ENCODE measurements at regions of chr11 and their contacts with region 1.

Region 1: DNA sequence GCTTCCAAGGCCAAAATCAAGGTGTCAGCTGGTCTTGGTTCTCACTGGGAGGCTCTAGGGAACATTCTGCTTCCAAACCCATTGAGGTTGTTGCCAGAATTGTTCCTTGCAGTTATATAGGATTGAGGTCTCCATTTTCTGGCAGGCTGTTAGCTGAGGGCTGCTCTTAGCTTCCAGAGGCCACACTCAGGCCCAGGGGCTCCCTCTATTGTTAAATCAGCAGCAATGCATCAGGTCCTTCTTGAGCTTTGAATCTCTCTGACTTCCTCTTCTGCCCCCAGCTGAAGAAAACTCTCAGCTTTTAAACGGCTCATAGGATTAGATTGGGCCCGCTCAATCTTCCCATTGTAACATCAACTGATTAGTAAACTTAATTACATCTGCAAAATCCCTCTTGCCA is 39.3 kb upstream of the BSX start:
- DNase-seq: peak; percentile 76
- H3K4me3 Mint-ChIP-seq: no peak overlapping the region
- H3K27ac Mint-ChIP-seq: no peak overlapping the region
- H3K4me1 Mint-ChIP-seq: peaks cover 6% of the 10 kb centered on the region
- H3K27me3 Mint-ChIP-seq: peaks cover 23% of the 10 kb centered on the region

Region 2: DNA sequence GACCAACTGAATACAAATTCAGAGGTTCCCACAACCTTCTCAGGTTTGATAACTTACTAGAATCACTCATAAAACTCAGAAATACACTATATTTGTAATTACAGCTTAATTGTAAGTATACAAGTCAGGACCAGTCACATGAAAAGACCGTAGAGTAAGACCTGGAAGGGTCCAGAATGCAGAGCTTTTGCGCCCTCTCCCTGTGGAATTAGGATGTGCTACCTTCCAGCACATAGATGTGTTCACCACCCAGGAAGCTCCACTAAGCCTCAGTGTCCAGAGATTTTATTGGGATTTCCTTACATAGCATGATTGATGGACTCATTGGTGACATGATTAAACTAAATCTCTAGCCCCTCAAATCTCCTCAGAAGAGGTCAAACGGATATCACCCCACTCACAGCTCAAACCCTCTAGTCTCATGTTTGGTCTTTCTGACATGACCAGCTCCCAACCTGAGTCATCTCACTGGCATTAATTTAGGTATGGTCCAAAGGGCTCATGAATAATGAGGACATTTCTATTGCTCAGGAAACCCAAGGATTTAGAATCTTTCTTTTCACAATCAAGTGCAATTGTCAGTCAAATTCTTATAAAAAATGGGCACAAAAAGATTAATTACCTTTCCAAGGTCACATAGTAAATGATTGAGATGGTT is 442.7 kb before region 1 on chr11:
- intact Hi-C with region 1: loop called (anchors 2 kb)
- DNase-seq: no peak
- H3K4me3 Mint-ChIP-seq: no peak overlapping the region
- H3K27ac Mint-ChIP-seq: no peak overlapping the region
- H3K4me1 Mint-ChIP-seq: peaks cover 7% of the 10 kb centered on the region
- H3K27me3 Mint-ChIP-seq: no peaks in the 10 kb centered on the region

Region 3: DNA sequence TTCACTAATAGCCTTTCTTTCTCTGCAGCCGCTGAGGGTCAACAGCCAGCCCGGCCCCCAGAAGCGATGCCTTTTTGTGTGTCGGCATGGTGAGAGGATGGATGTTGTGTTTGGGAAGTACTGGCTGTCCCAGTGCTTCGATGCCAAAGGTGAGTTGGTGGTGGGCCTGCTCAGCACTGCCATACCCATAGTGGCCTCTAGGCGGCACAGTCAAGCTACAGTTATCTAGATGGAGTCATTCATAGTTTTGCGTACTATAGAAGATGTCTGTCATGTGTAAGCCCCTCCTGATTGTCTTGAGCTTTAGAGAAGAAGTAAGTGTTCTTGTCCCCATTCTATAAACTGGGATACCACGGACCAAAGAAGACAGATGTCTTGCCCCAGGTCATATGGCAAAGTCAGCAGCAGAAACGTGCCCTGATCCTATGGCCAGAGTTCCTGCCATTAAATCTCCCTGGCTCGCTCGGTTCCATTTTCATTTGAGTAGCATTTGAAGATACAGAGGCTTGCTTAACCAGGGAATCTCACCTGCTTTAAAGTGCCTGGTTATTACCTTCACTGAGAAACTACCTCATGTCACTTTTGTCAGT is 224.7 kb before region 1 on chr11:
- intact Hi-C with region 1: loop called (anchors 2 kb)
- DNase-seq: peak; percentile 88
- H3K4me3 Mint-ChIP-seq: no peak overlapping the region
- H3K27ac Mint-ChIP-seq: no peak overlapping the region
- H3K4me1 Mint-ChIP-seq: no peaks in the 10 kb centered on the region
- H3K27me3 Mint-ChIP-seq: no peaks in the 10 kb centered on the region

Region 4: GRCh38 chr11:122863704-122864326 is 157.2 kb before region 1 on chr11:
- intact Hi-C with region 1: loop called (anchors 1 kb)
- DNase-seq: peak; percentile 77
- H3K4me3 Mint-ChIP-seq: no peak overlapping the region
- H3K27ac Mint-ChIP-seq: no peak overlapping the region
- H3K4me1 Mint-ChIP-seq: no peaks in the 10 kb centered on the region
- H3K27me3 Mint-ChIP-seq: peaks cover 46% of the 10 kb centered on the region

Region 5: GRCh38 chr11:122910775-122911174 is 110.2 kb before region 1 on chr11:
- intact Hi-C with region 1: loop called (anchors 1 kb)
- DNase-seq: no peak
- H3K4me3 Mint-ChIP-seq: no peak overlapping the region
- H3K27ac Mint-ChIP-seq: no peak overlapping the region
- H3K4me1 Mint-ChIP-seq: no peaks in the 10 kb centered on the region
- H3K27me3 Mint-ChIP-seq: peaks cover 2% of the 10 kb centered on the region

Region 6: GRCh38 chr11:122954455-122954854 is 66.5 kb before region 1 on chr11:
- intact Hi-C with region 1: no loop called
- DNase-seq: no peak
- H3K4me3 Mint-ChIP-seq: no peak overlapping the region
- H3K27ac Mint-ChIP-seq: no peak overlapping the region
- H3K4me1 Mint-ChIP-seq: no peaks in the 10 kb centered on the region
- H3K27me3 Mint-ChIP-seq: peaks cover 8% of the 10 kb centered on the region

Region 7: DNA sequence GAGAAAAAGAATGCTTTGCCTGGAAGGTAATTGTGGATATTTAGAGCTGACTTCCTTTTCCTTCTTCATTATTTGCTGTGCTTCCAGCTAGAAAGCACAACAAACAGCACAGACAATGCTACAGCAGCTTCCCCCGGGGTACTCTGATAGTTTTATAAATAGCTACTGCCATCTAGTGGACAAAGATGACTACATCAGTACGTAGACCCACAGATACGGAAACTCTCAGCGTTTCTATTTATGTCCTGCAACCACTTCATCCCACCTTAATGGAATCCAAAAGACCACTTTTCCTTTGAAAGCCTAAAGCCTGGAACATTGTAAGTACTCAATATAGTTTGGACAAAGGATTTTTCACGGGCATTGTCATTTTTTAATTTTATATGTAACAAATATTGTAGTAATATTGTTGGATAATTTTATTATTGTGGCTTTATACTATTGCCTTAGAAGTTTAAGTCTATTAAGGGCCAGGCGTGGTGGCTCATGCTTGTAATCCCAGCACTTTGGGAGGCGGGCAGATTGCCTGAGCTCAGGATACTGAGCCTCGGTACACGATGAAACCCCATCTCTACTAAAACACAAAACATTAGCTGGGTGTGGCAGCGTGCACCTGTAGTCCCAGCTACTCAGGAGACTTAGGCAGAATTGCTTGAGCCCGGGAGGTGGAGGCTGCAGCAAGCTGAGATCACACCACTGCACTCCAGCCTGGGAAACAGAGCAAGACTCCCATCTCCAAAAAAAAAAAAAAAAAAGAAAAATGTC is 33.5 kb after region 1 on chr11:
- intact Hi-C with region 1: loop called (anchors 2 kb)
- DNase-seq: peak; percentile 81
- H3K4me3 Mint-ChIP-seq: no peak overlapping the region
- H3K27ac Mint-ChIP-seq: peak overlapping the region; percentile 56
- H3K4me1 Mint-ChIP-seq: peaks cover 48% of the 10 kb centered on the region
- H3K27me3 Mint-ChIP-seq: no peaks in the 10 kb centered on the region

Region 8: GRCh38 chr11:123116486-123116885 is 95.5 kb after region 1 on chr11:
- intact Hi-C with region 1: no loop called
- DNase-seq: no peak
- H3K4me3 Mint-ChIP-seq: no peak overlapping the region
- H3K27ac Mint-ChIP-seq: no peak overlapping the region
- H3K4me1 Mint-ChIP-seq: peaks cover 5% of the 10 kb centered on the region
- H3K27me3 Mint-ChIP-seq: peaks cover 8% of the 10 kb centered on the region

Region 9: GRCh38 chr11:123218451-123218850 is 197.5 kb after region 1 on chr11:
- intact Hi-C with region 1: no loop called
- DNase-seq: no peak
- H3K4me3 Mint-ChIP-seq: no peak overlapping the region
- H3K27ac Mint-ChIP-seq: no peak overlapping the region
- H3K4me1 Mint-ChIP-seq: no peaks in the 10 kb centered on the region
- H3K27me3 Mint-ChIP-seq: peaks cover 35% of the 10 kb centered on the region

Measured in activated CD4-positive, alpha-beta T cell treated with anti-CD3 and anti-CD28 coated beads, Interleukin-2, amount 10 ng/mL, durations not matched to agents 24 days and 14 days (primary cell).